Activated CD4-positive, alpha-beta T cell treated with anti-CD3 and anti-CD28 coated beads for 36 hours (primary cell): ENCODE measurements at regions of chr16 and their contacts with region 1.

Region 1: DNA sequence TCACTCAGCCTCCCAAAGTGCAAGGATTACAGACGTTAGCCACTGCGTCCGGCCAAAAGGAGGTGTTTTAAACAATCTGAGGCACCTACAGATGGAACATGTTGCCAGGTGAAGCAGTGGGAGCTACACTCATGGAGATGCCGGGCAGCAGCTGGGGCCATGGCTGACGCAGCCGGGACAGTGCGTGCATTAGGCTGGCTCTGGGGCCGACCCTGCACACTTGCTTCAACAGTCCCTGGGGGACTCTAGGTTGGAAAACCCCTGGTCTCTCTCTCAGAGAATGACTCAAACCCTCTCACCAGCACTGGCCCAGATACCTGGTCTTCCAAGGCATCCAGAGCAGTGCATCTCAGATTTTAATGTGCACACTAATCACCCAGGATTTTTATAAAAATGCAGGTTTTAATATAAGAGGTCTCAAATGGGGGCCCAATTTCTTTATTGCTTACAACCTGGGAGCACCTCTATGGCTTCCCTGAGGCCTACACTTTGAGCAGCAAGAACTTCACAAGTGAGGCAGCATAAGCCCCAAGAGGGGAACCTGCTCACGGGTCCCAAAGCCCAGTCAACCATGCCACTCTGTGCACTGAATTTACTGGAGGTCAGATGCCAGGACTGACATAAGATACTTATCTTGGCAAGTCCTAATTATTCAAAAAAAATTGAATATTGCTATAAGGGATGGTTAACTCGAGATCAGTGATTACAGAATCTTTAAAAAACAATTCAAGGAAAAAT is 70.8 kb upstream of the TRAP1 start:
- DNase-seq: no peak
- ATAC-seq: no peak
- H3K4me3 Mint-ChIP-seq: no peak overlapping the region
- H3K27ac Mint-ChIP-seq: no peak overlapping the region
- H3K4me1 Mint-ChIP-seq: peaks cover 47% of the 10 kb centered on the region
- H3K27me3 Mint-ChIP-seq: peaks cover 9% of the 10 kb centered on the region

Region 2: GRCh38 chr16:3729161-3730112 is 58.7 kb before region 1 on chr16:
- CTCF ChIA-PET with region 1: no interaction called
- POLR2A ChIA-PET with region 1: no interaction called
- intact Hi-C with region 1: no loop called
- DNase-seq: no peak
- ATAC-seq: no peak
- H3K4me3 Mint-ChIP-seq: no peak overlapping the region
- H3K27ac Mint-ChIP-seq: no peak overlapping the region
- H3K4me1 Mint-ChIP-seq: no peaks in the 10 kb centered on the region
- H3K27me3 Mint-ChIP-seq: no peaks in the 10 kb centered on the region

Region 3: GRCh38 chr16:3810198-3810664 is 22.1 kb after region 1 on chr16:
- CTCF ChIA-PET with region 1: no interaction called
- POLR2A ChIA-PET with region 1: no interaction called
- intact Hi-C with region 1: loop called in 1 of 2 experiments (anchors 1 kb)
- DNase-seq: peak; percentile 61
- ATAC-seq: peak; percentile 81
- H3K4me3 Mint-ChIP-seq: no peak overlapping the region
- H3K27ac Mint-ChIP-seq: no peak overlapping the region
- H3K4me1 Mint-ChIP-seq: peaks cover 76% of the 10 kb centered on the region
- H3K27me3 Mint-ChIP-seq: no peaks in the 10 kb centered on the region

Region 4: DNA sequence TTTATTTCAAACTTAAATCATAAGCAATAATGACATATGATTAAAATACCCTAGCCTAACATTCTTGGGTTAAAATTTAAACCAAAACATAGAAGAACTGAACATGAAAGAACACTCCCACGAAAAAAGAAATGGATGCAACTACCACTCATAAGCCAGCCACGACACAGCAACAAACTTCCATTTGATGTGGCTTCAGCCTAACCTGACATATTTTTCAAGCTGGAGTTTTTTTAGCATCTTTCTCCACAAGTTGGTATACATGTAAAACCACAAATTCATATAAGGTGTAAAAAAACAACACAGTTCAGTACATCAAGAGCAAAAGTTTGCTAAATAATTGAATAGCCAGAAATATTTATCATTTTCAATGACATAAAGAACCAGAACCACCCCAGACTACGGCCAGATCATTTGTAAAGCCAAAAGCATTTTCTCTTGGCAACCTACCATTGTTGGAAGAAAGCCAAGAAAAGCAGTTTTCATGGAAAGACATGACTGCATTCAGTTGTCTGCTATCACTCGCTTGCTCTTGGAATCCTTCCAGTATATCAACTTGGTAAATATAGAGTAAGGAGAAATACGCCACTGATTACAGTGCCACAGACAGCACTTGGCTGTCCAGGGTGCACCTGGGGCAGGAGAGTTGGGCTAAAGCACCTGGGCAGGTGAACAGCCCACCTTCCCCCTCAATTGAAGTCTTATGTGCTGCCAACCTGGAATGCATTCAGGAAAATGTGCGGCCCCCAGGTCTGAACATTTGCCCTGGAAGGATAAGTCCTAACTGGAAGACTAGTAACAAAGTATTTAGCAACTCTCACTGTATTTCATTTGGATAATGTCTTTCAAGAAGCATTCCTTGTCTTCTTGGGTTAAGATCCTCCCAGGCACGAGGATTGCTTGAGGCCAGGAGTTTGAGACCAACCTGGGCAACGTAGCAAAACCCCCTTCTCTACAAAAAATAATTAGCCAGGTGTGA is 31.9 kb after region 1 on chr16:
- CTCF ChIA-PET with region 1: interaction called, 3 read pairs
- POLR2A ChIA-PET with region 1: no interaction called
- intact Hi-C with region 1: loop called (anchors 1 to 5 kb)
- DNase-seq: no peak
- ATAC-seq: no peak
- H3K4me3 Mint-ChIP-seq: no peak overlapping the region
- H3K27ac Mint-ChIP-seq: no peak overlapping the region
- H3K4me1 Mint-ChIP-seq: peaks cover 89% of the 10 kb centered on the region
- H3K27me3 Mint-ChIP-seq: no peaks in the 10 kb centered on the region

Region 5: DNA sequence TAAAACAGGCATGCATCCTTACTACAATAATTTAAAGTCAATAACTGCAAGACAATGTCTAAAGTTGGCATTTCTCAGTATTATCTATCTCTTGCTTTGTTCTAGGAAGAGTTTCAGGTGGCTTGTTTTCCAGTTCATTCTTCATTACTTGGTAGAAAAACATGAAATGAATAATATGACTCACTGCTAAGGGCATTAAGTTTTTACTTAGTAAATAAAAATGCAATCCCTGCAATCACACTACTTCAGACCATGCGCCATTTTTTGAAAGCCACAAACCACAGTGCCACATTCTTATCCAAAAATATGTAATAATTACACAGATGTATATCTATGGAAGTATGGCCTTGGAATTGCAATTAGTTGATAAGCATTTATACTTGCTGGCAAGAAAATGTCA is 37.0 kb after region 1 on chr16:
- CTCF ChIA-PET with region 1: no interaction called
- POLR2A ChIA-PET with region 1: no interaction called
- intact Hi-C with region 1: loop called (anchors 1 to 5 kb)
- DNase-seq: peak; percentile 49
- ATAC-seq: peak; percentile 65
- H3K4me3 Mint-ChIP-seq: no peak overlapping the region
- H3K27ac Mint-ChIP-seq: no peak overlapping the region
- H3K4me1 Mint-ChIP-seq: peaks cover 79% of the 10 kb centered on the region
- H3K27me3 Mint-ChIP-seq: no peaks in the 10 kb centered on the region

Region 6: GRCh38 chr16:4253394-4254150 is 465.5 kb after region 1 on chr16:
- CTCF ChIA-PET with region 1: no interaction called
- POLR2A ChIA-PET with region 1: no interaction called
- intact Hi-C with region 1: no loop called
- DNase-seq: peak; percentile 100
- ATAC-seq: peak; percentile 98
- H3K4me3 Mint-ChIP-seq: peak overlapping the region; percentile 92
- H3K27ac Mint-ChIP-seq: peak overlapping the region; percentile 96
- H3K4me1 Mint-ChIP-seq: peaks cover 3% of the 10 kb centered on the region
- H3K27me3 Mint-ChIP-seq: no peaks in the 10 kb centered on the region